ENCODE measurements at regions of chr2 and their contacts with region 1.

Region 1: DNA sequence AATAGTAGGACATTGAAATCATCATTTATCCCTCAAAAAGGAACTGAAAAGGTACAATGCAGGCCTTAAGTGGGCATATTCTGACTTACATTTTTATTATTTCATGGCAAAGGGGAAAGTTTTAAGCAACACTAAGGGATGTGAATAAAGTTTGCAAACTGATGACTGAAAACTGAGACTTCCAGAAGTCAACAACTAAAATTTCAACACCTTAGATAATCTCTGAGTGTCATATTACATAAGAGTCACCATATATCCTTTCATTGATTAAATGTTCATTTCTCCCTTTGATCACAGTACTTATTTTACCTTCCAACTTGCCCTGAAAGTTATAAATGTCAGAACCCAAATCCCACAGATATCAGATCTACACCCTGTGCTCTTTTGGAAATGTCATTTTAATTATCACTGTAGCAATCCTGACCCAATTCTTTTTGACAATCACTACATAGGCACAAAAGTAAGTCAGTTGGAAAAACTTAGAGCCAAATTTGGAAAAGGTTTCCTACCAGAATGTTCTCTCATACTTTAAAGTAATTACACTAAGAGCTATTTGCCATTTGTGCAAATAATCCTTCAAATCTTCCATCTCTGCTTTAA is 44.4 kb upstream of the RNU4ATAC start:
- DNase-seq: no peak
- ATAC-seq: no peak
- H3K4me3 ChIP-seq: no peak overlapping the region
- H3K27ac ChIP-seq: no peak overlapping the region
- H3K4me1 ChIP-seq: peaks cover 16% of the 10 kb centered on the region
- H3K27me3 ChIP-seq: no peaks in the 10 kb centered on the region
- CTCF ChIP-seq: no peak
- EP300 ChIP-seq: no peak
- POLR2A ChIP-seq: no peak
- RAD21 ChIP-seq: no peak

Region 2: GRCh38 chr2:121513597-121514333 is 27.5 kb after region 1 on chr2:
- CTCF ChIA-PET with region 1: no interaction called
- POLR2A ChIA-PET with region 1: no interaction called
- in situ Hi-C with region 1: no loop called
- intact Hi-C with region 1: loop called (anchors 1 kb)
- DNase-seq: no peak
- ATAC-seq: no peak
- H3K4me3 ChIP-seq: no peak overlapping the region
- H3K27ac ChIP-seq: no peak overlapping the region
- H3K4me1 ChIP-seq: no peaks in the 10 kb centered on the region
- H3K27me3 ChIP-seq: no peaks in the 10 kb centered on the region
- CTCF ChIP-seq: no peak
- EP300 ChIP-seq: no peak
- POLR2A ChIP-seq: no peak; a peak in 1 of 4 replicates
- RAD21 ChIP-seq: no peak